ENCODE measurements at regions of chr18 and their contacts with region 1.

Region 1: GRCh38 chr18:21406111-21406510 is 164.1 kb downstream of the GREB1L start:
- DNase-seq: no peak
- ATAC-seq: no peak
- H3K4me3 Mint-ChIP-seq: no peak overlapping the region
- H3K27ac Mint-ChIP-seq: no peak overlapping the region
- H3K4me1 Mint-ChIP-seq: no peaks in the 10 kb centered on the region
- H3K27me3 Mint-ChIP-seq: no peaks in the 10 kb centered on the region
- CTCF ChIP-seq: no peak

Region 2: DNA sequence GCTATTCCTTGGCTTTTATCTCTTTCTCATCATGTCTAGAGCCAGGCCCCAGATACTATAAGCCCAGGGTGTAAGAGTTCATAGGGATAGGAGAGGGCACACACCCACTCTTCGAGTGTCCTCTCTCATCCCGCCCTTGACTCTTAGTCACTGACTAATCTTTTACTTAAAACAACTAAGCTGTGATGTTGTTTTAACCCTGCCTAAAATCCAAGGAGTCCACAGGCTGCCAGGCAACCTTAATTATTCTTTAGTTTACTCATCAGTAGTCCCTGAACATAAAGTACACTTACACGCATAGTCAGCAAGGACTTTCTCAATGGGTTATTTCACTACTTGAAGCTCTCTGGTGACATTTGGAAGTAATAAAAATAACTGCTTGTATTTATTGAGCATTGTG is 135.7 kb before region 1 on chr18:
- CTCF ChIA-PET with region 1: no interaction called
- POLR2A ChIA-PET with region 1: no interaction called
- intact Hi-C with region 1: no loop called
- DNase-seq: no peak
- ATAC-seq: no peak
- H3K4me3 Mint-ChIP-seq: no peak overlapping the region
- H3K27ac Mint-ChIP-seq: no peak overlapping the region
- H3K4me1 Mint-ChIP-seq: no peaks in the 10 kb centered on the region
- H3K27me3 Mint-ChIP-seq: no peaks in the 10 kb centered on the region
- CTCF ChIP-seq: no peak

Region 3: DNA sequence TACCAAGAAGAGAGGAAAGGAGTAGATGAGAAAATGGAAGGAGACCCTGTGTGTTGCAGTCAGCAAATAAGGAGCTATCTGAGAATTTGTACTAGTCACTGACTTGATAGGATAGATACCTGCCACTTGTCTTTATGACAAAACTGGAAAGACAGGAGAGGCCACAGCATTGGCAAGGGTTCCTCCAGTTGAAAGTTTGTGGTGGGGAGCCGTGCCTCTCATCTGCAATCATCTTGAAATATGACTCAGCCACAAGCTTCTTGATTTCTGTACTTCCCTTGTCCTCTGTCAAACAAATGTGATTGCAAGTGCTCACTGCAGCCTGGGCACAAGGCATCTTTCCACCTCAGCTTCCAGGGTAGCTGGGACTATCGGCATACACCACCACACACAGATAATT is 65.0 kb before region 1 on chr18:
- CTCF ChIA-PET with region 1: no interaction called
- POLR2A ChIA-PET with region 1: no interaction called
- intact Hi-C with region 1: no loop called
- DNase-seq: no peak
- ATAC-seq: no peak
- H3K4me3 Mint-ChIP-seq: no peak overlapping the region
- H3K27ac Mint-ChIP-seq: no peak overlapping the region
- H3K4me1 Mint-ChIP-seq: no peaks in the 10 kb centered on the region
- H3K27me3 Mint-ChIP-seq: no peaks in the 10 kb centered on the region
- CTCF ChIP-seq: no peak

Region 4: GRCh38 chr18:21463718-21464117 is 57.6 kb after region 1 on chr18:
- CTCF ChIA-PET with region 1: no interaction called
- POLR2A ChIA-PET with region 1: no interaction called
- intact Hi-C with region 1: loop called (anchors 10 kb)
- DNase-seq: no peak
- ATAC-seq: no peak
- H3K4me3 Mint-ChIP-seq: no peak overlapping the region
- H3K27ac Mint-ChIP-seq: no peak overlapping the region
- H3K4me1 Mint-ChIP-seq: no peaks in the 10 kb centered on the region
- H3K27me3 Mint-ChIP-seq: peaks cover 11% of the 10 kb centered on the region
- CTCF ChIP-seq: no peak

Region 5: GRCh38 chr18:21489119-21489750 is 83.1 kb after region 1 on chr18:
- CTCF ChIA-PET with region 1: no interaction called
- POLR2A ChIA-PET with region 1: no interaction called
- intact Hi-C with region 1: loop called (anchors 10 kb)
- DNase-seq: peak; percentile 46
- ATAC-seq: peak; percentile 37
- H3K4me3 Mint-ChIP-seq: no peak overlapping the region
- H3K27ac Mint-ChIP-seq: no peak overlapping the region
- H3K4me1 Mint-ChIP-seq: peaks cover 1% of the 10 kb centered on the region
- H3K27me3 Mint-ChIP-seq: no peaks in the 10 kb centered on the region
- CTCF ChIP-seq: peak; percentile 90

Region 6: DNA sequence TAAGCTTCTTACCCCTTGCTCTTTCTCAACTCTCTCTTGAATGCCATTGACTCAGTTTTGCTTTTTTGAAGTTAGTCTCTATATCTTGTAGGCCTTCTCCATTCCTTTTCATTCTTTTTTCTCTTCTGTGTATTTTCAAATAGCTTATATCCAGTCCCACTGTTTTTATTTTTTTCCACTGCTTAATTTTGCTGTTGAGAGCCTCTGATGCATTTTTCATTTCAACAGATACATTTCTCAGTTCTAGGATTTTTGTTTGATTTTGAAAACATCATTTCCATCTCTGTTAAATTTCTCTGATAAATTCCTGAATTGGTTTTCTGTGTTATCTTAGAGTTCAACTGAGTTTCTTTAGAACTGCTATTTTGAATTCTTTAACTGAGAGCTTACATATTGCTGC is 380.4 kb after region 1 on chr18:
- CTCF ChIA-PET with region 1: no interaction called
- POLR2A ChIA-PET with region 1: no interaction called
- intact Hi-C with region 1: no loop called
- DNase-seq: no peak
- ATAC-seq: no peak
- H3K4me3 Mint-ChIP-seq: no peak overlapping the region
- H3K27ac Mint-ChIP-seq: no peak overlapping the region
- H3K4me1 Mint-ChIP-seq: no peaks in the 10 kb centered on the region
- H3K27me3 Mint-ChIP-seq: no peaks in the 10 kb centered on the region
- CTCF ChIP-seq: no peak

Measured in activated CD8-positive, alpha-beta T cell treated with anti-CD3 and anti-CD28 coated beads for 36 hours (primary cell).